Adrenal gland (tissue), 19 donors: ENCODE measurements at regions of chr17 and their contacts with region 1.

Region 1: DNA sequence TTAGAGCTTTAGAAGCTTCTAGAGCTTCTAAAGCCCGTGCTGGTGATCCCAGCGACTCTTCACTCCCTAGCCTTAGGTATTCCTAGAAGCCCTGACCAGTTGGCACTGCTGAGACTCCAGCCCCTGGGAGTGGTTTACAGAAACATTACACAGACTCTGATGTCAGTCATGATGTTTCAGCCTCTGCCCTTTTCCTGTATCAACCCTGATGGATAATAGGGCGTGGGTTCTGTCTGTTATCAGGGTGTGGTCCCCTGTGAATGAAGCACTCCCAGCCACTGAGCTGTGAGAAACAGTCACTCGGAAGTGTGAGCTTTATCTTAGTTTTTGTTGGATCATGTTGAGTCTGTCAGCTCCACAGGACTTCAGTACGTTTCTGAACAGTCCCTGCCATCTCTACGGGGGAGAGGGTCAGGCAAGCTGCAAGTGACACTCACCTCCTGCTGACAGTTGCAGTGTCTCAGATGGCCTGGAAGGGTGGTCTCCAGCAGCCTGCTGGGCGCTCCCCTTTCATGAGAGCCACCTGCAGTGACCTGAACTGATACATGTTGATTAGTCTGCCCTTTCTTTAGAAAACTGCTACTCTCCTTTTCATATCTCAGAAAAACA is 12.8 kb downstream of the GOSR2 start:
- DNase-seq: no peak
- H3K4me3 ChIP-seq: no peak overlapping the region
- H3K27ac ChIP-seq: no peak overlapping the region
- H3K4me1 ChIP-seq: no peaks in the 10 kb centered on the region
- H3K27me3 ChIP-seq: no peaks in the 10 kb centered on the region
- CTCF ChIP-seq: no peak
- POLR2A ChIP-seq: no peak

Region 2: GRCh38 chr17:46841561-46842379 is 94.0 kb before region 1 on chr17:
- intact Hi-C with region 1: loop called in 1 of 2 experiments (anchors 2 kb)
- DNase-seq: peak in 2 of 7 donors; percentile 31 to 32
- H3K4me3 ChIP-seq: peak overlapping the region in 1 of 4 donors; percentile 26
- H3K27ac ChIP-seq: no peak overlapping the region
- H3K4me1 ChIP-seq: peaks cover 0 to 8% of the 10 kb centered on the region in 2 donors
- H3K27me3 ChIP-seq: peaks cover 14% of the 10 kb centered on the region
- CTCF ChIP-seq: peak; percentile 28 to 79 (median 49)
- POLR2A ChIP-seq: no peak